Mucosa of descending colon (tissue), 3 donors: ENCODE measurements at regions of chrX and their contacts with region 1.

Region 1: DNA sequence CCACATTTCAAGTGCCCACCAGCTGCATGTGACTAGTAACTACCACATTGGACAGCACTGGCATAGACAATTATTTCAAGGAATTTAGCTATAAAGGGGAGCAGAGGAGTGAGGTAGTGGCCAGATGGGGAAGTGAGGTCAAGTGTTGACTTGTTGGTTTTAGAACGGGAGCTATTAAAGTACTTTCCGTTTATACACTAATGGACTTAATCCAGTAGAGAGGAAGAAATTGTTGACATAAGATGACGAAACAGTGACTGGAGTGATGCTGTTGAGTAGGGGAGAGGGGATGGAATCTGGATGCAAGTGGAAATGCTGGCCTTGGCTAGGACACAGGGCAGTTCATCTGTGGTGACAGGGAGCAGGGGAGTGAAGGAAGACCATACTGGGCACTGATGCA is 154.4 kb downstream of the AMMECR1 start:
- DNase-seq: no peak
- ATAC-seq: no peak
- H3K4me3 ChIP-seq: no peak overlapping the region
- H3K4me1 ChIP-seq: no peaks in the 10 kb centered on the region
- CTCF ChIP-seq: no peak

Region 2: DNA sequence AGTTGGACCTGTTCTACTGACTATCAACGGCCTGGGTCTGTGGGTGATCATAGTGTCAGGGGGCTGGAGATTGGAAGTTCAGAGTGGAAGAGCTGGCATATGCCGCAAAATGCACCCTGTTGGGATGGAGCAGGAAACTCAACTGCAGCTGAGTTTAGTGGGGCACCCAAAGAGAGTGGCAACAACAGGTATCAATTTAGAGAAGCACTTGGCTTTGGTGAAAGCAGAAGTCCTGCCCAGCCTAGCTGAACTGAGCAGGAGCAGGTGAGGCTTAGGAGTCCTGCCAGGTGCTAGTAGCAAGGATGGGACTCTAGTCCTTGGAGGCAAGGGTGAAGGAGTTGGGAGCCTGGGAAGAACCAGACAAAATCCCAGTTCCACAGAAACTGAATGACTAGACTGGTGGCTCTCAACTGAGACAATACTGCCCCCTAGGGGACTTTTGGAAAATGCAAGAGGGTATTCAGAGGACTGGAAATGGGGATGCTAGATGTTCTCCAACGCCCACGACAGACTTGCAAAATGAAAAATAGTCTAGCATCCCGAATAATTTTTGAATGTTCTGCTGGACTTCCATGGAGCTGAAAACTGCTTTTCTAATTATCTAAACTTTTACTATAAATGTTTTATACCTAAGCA is 244.5 kb after region 1 on chrX:
- intact Hi-C with region 1: loop called (anchors 5 kb)
- DNase-seq: peak in 1 of 3 donors; percentile 76
- ATAC-seq: peak; percentile 76
- H3K4me3 ChIP-seq: no peak overlapping the region
- H3K4me1 ChIP-seq: no peaks in the 10 kb centered on the region
- CTCF ChIP-seq: no peak